Caki2 (cell line): ENCODE measurements at regions of chr3 and their contacts with region 1.

Region 1: GRCh38 chr3:129650256-129650872 is 43.9 kb upstream of the PLXND1 start:
- DNase-seq: peak; percentile 53

Region 2: DNA sequence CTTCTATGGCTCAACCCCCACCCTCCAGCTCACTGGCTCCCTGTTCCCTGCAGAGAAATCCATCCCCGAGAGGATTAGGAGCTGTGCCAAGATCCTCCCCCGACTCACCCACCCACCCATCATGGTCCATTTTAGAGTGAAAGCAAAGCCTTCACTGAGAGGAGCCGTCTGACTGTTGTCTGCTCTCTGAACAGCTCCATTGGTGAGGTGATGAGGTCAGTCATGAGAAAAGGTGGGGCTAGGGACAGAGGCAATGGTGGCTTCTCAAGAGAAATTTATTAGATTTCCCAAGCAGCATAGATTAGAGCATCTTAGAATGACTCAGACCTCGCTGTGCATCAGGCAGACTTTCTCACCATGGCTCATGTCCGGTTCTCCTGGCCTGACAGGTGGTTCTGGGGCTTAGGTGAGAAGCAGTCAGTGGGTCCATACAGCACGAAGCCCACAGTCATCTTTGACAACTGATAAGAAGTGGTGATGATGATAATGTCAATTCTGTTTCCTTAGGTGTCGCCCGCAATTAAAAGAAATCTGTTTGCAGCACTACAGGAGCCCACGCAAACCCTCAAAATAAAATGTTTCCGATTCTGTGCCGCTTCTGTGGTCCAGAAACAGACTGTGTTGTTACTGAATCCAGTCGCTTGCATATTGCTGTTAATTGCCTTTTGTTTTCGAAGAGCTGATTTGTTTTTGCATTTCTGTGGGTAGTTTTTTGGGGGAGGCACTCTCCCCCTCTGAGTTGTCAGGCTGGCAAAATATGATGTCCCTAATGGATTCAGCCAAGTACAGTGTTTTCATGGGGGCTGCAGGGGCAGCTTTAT is 146.7 kb before region 1 on chr3:
- in situ Hi-C with region 1: no loop called
- DNase-seq: no peak

Region 3: GRCh38 chr3:129606636-129607390 is 43.6 kb before region 1 on chr3 and contains the start of gene PLXND1:
- in situ Hi-C with region 1: no loop called
- DNase-seq: peak; percentile 68
- total RNA-seq, gene PLXND1: 29.0 and 74.1 TPM in 2 replicates

Region 4: GRCh38 chr3:129618901-129619671 is 31.3 kb before region 1 on chr3:
- in situ Hi-C with region 1: no loop called
- DNase-seq: no peak

Region 5: DNA sequence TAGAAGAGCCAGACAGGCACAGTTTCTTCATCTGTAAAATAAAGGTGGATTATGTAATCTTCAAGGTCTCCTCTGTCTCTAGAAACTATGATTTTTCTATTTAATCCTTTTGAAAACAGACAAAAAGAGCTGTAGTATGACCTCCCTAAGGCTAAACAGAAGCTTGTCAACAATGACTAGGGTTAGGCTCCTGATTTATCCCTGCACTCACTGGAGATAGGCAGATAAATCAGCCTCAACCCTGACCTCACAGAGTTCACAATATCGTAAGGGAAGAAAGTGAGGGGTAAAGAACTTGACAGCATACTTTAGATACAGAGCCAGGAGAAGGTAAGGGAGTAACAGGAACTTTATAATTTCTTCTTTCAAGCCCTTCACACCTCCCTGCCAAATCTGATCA is 118.4 kb after region 1 on chr3:
- in situ Hi-C with region 1: no loop called
- DNase-seq: no peak

Region 6: GRCh38 chr3:129824926-129825541 is 174.7 kb after region 1 on chr3:
- in situ Hi-C with region 1: loop called (anchors 10 kb)
- DNase-seq: peak; percentile 52